ENCODE measurements at regions of chr2 and their contacts with region 1.

Region 1: DNA sequence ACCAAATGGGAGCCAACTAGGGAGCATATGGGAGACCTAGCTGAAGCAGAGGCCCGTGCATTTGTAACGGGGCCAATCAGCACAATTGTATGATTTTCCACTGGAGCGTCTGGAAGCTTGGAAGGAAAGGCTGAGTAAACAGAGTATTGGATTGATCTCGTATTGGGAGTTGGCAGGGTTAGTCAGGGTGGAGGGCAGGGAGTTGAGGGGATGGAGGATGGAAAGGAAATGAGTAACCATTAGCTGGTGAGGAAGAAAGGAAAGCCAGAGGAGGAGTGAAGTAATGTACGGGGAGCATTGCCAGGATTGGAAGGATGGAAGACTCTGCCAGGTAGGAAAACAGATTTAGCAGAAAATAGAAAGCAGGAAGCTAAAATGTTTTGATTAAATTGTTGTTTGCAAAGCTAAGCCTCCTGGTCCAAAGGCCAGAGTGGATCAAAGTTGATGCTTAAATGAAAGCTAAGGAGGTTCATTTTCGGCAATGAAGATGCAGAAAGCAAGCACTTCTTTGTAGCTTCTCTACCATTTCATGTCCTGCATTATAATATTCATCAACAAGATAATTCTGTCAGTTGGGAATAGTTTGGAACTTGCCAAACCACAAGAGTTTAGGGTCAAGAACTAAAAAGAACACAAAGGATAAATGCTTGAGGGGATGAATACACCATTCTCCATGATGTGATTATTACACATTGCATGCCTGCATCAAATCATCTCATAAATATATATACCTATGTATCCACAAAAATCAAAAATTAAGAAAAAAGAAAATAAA is 75.6 kb upstream of the TTN start:
- DNase-seq: no peak
- H3K4me3 ChIP-seq: no peak overlapping the region
- H3K27ac ChIP-seq: no peak overlapping the region
- H3K4me1 ChIP-seq: no peaks in the 10 kb centered on the region
- H3K27me3 ChIP-seq: no peaks in the 10 kb centered on the region
- CTCF ChIP-seq: no peak

Region 2: DNA sequence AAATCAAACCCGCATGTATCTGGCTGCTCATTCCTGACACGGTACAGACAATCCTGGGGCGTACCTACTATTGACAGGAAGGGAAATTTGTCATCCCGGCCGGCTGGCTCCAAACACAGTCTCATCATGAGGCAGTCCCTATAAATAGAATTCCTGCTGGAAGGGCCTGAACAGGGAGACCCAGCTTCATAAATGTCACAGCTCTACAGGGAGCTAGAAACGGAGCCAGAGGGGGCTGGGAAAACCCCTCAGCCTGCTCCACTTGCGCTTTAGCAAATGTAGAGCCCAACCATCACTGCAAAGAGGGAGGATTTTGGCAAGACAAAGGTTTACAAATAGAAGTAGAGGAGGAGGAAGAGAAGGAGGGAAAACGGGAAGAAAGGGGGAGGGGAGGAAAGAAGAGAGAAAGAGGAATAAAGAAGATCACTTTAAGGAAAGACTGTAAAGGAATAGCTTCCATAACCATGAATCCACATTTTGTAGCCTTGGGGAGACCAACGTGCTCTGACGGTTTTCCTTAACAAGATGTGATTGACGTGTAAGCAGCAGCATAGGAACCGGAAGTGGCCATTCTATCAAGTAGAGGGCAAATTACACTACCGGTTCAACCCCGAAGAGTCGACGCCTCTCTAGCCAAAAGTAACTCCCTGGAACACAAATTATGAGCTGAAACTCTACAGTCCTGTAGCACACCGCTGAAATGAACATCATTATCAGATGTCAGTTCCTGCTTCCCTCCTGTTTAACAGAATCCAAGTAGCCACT is 18.8 kb before region 1 on chr2:
- CTCF ChIA-PET with region 1: interaction called, 16 read pairs
- POLR2A ChIA-PET with region 1: no interaction called
- intact Hi-C with region 1: no loop called
- DNase-seq: no peak
- H3K4me3 ChIP-seq: no peak overlapping the region
- H3K27ac ChIP-seq: peak overlapping the region; percentile 54
- H3K4me1 ChIP-seq: peaks cover 32% of the 10 kb centered on the region
- H3K27me3 ChIP-seq: no peaks in the 10 kb centered on the region
- CTCF ChIP-seq: no peak